ENCODE measurements at regions of chrX and their contacts with region 1.

Region 1: GRCh38 chrX:78555401-78555980 is 103.6 kb downstream of the RTL3 start:
- DNase-seq: no peak
- H3K4me3 ChIP-seq: no peak overlapping the region
- H3K27ac ChIP-seq: no peak overlapping the region
- H3K4me1 ChIP-seq: no peaks in the 10 kb centered on the region
- H3K27me3 ChIP-seq: no peaks in the 10 kb centered on the region
- CTCF ChIP-seq: peak in 2 of 3 donors; percentile 33 to 54
- EP300 ChIP-seq: no peak
- POLR2A ChIP-seq: no peak

Region 2: GRCh38 chrX:78384486-78384885 is 171.0 kb before region 1 on chrX:
- intact Hi-C with region 1: no loop called
- DNase-seq: no peak
- H3K4me3 ChIP-seq: no peak overlapping the region
- H3K27ac ChIP-seq: no peak overlapping the region
- H3K4me1 ChIP-seq: no peaks in the 10 kb centered on the region
- H3K27me3 ChIP-seq: no peaks in the 10 kb centered on the region
- CTCF ChIP-seq: no peak
- EP300 ChIP-seq: no peak
- POLR2A ChIP-seq: no peak

Region 3: DNA sequence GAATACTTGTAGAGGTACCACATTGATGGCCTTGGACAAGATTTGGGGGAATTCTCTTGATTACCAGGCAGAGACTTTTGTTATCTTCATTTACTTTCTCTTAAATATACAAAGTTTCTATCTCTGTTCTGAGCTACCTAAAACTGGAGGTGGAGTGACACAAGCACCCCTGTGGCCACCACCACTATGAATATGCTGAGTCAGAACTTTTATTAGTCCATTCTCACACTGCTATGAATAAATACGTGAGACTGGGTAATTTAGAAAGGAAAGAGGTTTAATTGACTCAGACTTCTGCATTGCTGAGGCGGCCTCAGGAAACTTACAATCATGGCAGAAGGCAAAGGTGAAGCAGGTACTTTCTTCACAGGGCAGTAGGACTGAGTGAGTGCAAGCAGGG is 36.5 kb after region 1 on chrX:
- intact Hi-C with region 1: loop called in 1 of 4 experiments (anchors 1 kb)
- DNase-seq: no peak
- H3K4me3 ChIP-seq: no peak overlapping the region
- H3K27ac ChIP-seq: no peak overlapping the region
- H3K4me1 ChIP-seq: no peaks in the 10 kb centered on the region
- H3K27me3 ChIP-seq: no peaks in the 10 kb centered on the region
- CTCF ChIP-seq: no peak
- EP300 ChIP-seq: no peak
- POLR2A ChIP-seq: no peak

Region 4: GRCh38 chrX:78769101-78769755 is 213.7 kb after region 1 on chrX:
- intact Hi-C with region 1: no loop called
- DNase-seq: no peak
- H3K4me3 ChIP-seq: no peak overlapping the region
- H3K27ac ChIP-seq: no peak overlapping the region
- H3K4me1 ChIP-seq: no peaks in the 10 kb centered on the region
- H3K27me3 ChIP-seq: no peaks in the 10 kb centered on the region
- CTCF ChIP-seq: no peak
- EP300 ChIP-seq: no peak
- POLR2A ChIP-seq: no peak

Measured in ovary (tissue), 10 donors.